ENCODE measurements at regions of chr6 and their contacts with region 1.

Region 1: GRCh38 chr6:54595844-54596243 is 250.7 kb upstream of the FAM83B start:
- DNase-seq: peak; percentile 79
- ATAC-seq: peak; percentile 96
- H3K4me3 ChIP-seq: no peak overlapping the region
- H3K27ac ChIP-seq: peak overlapping the region; percentile 100; the same call in 1 of the 2 replicates
- H3K4me1 ChIP-seq: peaks cover 4% of the 10 kb centered on the region
- H3K27me3 ChIP-seq: no peaks in the 10 kb centered on the region
- CTCF ChIP-seq: no peak
- POLR2A ChIP-seq: no peak
- RAD21 ChIP-seq: no peak

Region 2: DNA sequence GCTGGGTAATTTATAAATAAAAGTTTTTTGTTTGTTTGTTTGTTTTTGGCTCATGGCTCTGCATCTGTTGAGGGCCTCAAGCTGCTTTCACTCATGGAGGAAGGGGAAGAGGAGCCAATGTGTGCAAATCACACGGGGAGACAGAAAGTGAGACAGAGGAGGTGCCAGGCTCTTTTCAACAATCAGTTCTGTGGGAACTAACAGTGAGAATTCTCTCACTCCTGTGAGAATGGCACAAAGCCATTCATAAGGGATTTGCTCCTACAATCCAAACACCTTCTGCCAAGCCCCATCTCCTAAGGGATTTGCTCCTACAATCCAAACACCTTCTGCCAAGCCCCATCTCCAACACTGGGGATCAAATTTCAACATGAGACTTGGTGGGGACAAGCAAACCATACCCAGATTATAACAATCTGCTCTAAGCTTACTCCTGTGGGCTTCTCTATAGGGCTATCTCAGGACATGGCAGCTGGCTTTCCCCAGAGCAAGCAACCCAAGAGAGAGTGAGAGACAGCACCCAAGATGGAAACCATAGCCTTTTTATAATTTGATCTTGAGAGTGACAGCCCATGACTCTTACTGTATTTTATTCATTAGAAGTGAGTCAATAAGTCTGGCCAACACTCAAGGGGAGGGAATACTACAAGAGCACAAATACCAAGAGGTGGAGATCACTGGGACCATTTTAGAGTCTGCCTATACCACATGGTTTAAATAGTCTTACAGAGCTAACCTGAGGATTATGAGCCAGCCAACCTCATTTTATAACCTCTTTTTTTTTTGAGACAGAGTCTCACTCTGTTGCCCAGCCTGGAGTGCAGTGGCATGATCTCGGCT is 823.8 kb before region 1 on chr6:
- CTCF ChIA-PET with region 1: no interaction called
- POLR2A ChIA-PET with region 1: no interaction called
- dilution Hi-C with region 1: no loop called
- in situ Hi-C with region 1: no loop called
- intact Hi-C with region 1: no loop called
- DNase-seq: peak; percentile 83
- ATAC-seq: peak; percentile 82
- H3K4me3 ChIP-seq: no peak overlapping the region
- H3K27ac ChIP-seq: no peak overlapping the region
- H3K4me1 ChIP-seq: peaks cover 5% of the 10 kb centered on the region; the same call in 1 of the 2 replicates
- H3K27me3 ChIP-seq: no peaks in the 10 kb centered on the region
- CTCF ChIP-seq: no peak
- POLR2A ChIP-seq: no peak
- RAD21 ChIP-seq: no peak

Region 3: GRCh38 chr6:54609981-54610380 is 14.1 kb after region 1 on chr6:
- CTCF ChIA-PET with region 1: interaction called, 3 read pairs
- POLR2A ChIA-PET with region 1: no interaction called
- dilution Hi-C with region 1: no loop called
- in situ Hi-C with region 1: no loop called
- intact Hi-C with region 1: loop called (anchors 2 kb)
- DNase-seq: no peak
- ATAC-seq: 0 out of 2 replicates have a peak, but pooled peaks have one; percentile 21
- H3K4me3 ChIP-seq: no peak overlapping the region
- H3K27ac ChIP-seq: no peak overlapping the region
- H3K4me1 ChIP-seq: no peaks in the 10 kb centered on the region
- H3K27me3 ChIP-seq: no peaks in the 10 kb centered on the region
- CTCF ChIP-seq: no peak
- POLR2A ChIP-seq: no peak
- RAD21 ChIP-seq: no peak

Measured in IMR-90 (cell line).